ENCODE measurements at regions of chr22 and their contacts with region 1.

Region 1: GRCh38 chr22:40898850-40899357 is 37.0 kb upstream of the DNAJB7 start:
- DNase-seq: peak; percentile 44
- ATAC-seq: peak; percentile 92
- H3K4me3 ChIP-seq: no peak overlapping the region
- H3K27ac ChIP-seq: no peak overlapping the region
- H3K4me1 ChIP-seq: no peaks in the 10 kb centered on the region
- H3K27me3 ChIP-seq: no peaks in the 10 kb centered on the region
- CTCF ChIP-seq: peak; percentile 48 to 68 (median 54); a peak in 5 of 6 replicates
- EP300 ChIP-seq: no peak
- POLR2A ChIP-seq: no peak
- RAD21 ChIP-seq: peak; percentile 77

Region 2: GRCh38 chr22:40651563-40652501 is 247.1 kb before region 1 on chr22:
- CTCF ChIA-PET with region 1: interaction called, 26 read pairs
- POLR2A ChIA-PET with region 1: interaction called, 3 read pairs
- RAD21 ChIA-PET with region 1: interaction called, 19 read pairs
- SMC1A ChIA-PET with region 1: interaction called, 10 read pairs
- in situ Hi-C with region 1: no loop called
- intact Hi-C with region 1: no loop called
- DNase-seq: no peak
- ATAC-seq: peak; percentile 85
- H3K4me3 ChIP-seq: peak overlapping the region; percentile 49; the same call in 1 of the 2 replicates
- H3K27ac ChIP-seq: peak overlapping the region; percentile 85
- H3K4me1 ChIP-seq: peaks cover 8% of the 10 kb centered on the region
- H3K27me3 ChIP-seq: no peaks in the 10 kb centered on the region
- CTCF ChIP-seq: no peak
- EP300 ChIP-seq: no peak
- POLR2A ChIP-seq: peak; percentile 91
- RAD21 ChIP-seq: no peak

Region 3: GRCh38 chr22:40758390-40758789 is 140.5 kb before region 1 on chr22:
- CTCF ChIA-PET with region 1: interaction called, 9 read pairs
- POLR2A ChIA-PET with region 1: no interaction called
- RAD21 ChIA-PET with region 1: interaction called, 10 read pairs
- SMC1A ChIA-PET with region 1: interaction called, 4 read pairs
- in situ Hi-C with region 1: no loop called
- intact Hi-C with region 1: no loop called
- DNase-seq: no peak
- ATAC-seq: no peak
- H3K4me3 ChIP-seq: no peak overlapping the region
- H3K27ac ChIP-seq: no peak overlapping the region
- H3K4me1 ChIP-seq: no peaks in the 10 kb centered on the region
- H3K27me3 ChIP-seq: no peaks in the 10 kb centered on the region
- CTCF ChIP-seq: no peak
- EP300 ChIP-seq: no peak
- POLR2A ChIP-seq: no peak
- RAD21 ChIP-seq: no peak

Region 4: DNA sequence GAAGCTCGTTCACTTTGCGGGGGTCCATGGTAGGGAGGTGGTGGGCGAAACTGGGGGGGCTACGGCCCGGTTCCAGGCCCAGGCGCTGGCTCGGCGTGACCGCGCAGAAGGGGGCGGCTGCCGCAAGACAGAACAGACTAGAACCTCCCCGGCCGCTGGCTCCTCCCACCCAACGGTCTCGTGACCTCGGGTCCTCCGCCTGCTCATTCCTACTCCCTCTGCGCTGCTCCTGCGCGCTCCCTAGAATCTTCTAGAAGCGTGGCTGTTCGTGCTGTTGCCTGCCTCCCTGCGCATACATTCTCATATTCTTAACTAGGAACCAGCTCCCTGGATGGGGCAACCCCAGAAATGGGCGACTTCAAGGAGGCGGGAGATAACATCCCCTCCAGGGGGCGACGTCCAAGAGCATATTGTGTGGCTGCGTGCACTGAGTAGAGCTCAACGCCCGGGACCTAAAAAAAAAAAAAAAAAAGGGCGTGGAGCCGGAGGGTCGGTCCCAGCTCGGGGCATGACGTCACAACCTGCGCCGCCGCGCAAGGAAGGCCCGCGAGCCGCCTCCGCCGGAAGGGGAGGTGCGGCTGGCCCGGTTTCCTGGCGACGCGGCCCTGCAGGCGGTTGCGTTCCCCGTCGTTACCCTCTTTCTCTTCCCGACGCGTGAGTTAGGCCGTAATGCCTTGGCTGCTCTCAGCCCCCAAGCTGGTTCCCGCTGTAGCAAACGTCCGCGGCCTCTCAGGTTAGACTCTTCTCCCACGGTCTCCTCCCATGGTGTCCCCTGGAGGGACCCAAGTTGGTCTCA is 42.2 kb before region 1 on chr22 and contains the starts of genes ST13 and XPNPEP3:
- CTCF ChIA-PET with region 1: interaction called, 15 read pairs
- POLR2A ChIA-PET with region 1: no interaction called
- RAD21 ChIA-PET with region 1: interaction called, 17 read pairs
- SMC1A ChIA-PET with region 1: interaction called, 14 read pairs
- in situ Hi-C with region 1: no loop called
- intact Hi-C with region 1: no loop called
- DNase-seq: peak; percentile 82
- ATAC-seq: peak; percentile 96
- H3K4me3 ChIP-seq: peak within 1 kb of the TSS; percentile 98
- H3K27ac ChIP-seq: peak within 1 kb of the TSS; percentile 96
- H3K4me1 ChIP-seq: peaks cover 4% of the 10 kb centered on the region
- H3K27me3 ChIP-seq: no peaks in the 10 kb centered on the region
- CTCF ChIP-seq: peak; percentile 21 to 33 (median 30); a peak in 3 of 6 replicates
- EP300 ChIP-seq: peak in 1 of 2 experiments; percentile 60; a peak in 2 of 4 replicates
- POLR2A ChIP-seq: peak; percentile 79
- RAD21 ChIP-seq: no peak
- polyA plus RNA-seq, gene ST13: 52.5 to 86.9 TPM
- polyA plus RNA-seq, gene XPNPEP3: 6.7 to 7.5 TPM

Region 5: DNA sequence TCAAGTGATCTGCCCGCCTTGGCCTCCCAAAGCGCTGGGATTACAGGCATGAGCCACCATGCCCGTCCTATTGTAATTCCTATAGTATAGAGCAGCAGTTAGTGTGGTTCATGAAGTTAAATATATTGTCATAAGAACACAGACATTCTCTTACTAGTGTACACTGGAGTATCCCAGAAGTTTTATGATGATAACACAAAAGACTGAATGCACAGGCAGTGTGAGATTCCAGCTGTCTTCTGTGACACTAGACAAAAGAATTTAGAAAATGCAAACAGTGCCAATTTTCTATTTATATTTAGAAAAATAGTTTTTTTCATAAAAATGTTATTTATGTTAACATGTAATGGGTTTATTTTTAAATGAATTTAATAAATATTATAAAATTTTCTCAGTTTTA is 12.9 kb after region 1 on chr22:
- CTCF ChIA-PET with region 1: interaction called, 8 read pairs
- POLR2A ChIA-PET with region 1: no interaction called
- RAD21 ChIA-PET with region 1: no interaction called
- SMC1A ChIA-PET with region 1: interaction called, 10 read pairs
- in situ Hi-C with region 1: no loop called
- intact Hi-C with region 1: no loop called
- DNase-seq: no peak
- ATAC-seq: no peak
- H3K4me3 ChIP-seq: no peak overlapping the region
- H3K27ac ChIP-seq: no peak overlapping the region
- H3K4me1 ChIP-seq: no peaks in the 10 kb centered on the region
- H3K27me3 ChIP-seq: no peaks in the 10 kb centered on the region
- CTCF ChIP-seq: no peak
- EP300 ChIP-seq: no peak
- POLR2A ChIP-seq: no peak
- RAD21 ChIP-seq: no peak